ENCODE measurements at regions of chr20 and their contacts with region 1.

Region 1: GRCh38 chr20:49219089-49219923 is at the start of gene DDX27:
- DNase-seq: peak; percentile 98
- ATAC-seq: peak; percentile 90
- H3K4me3 Mint-ChIP-seq: peak within 1 kb of the TSS; percentile 90
- H3K27ac Mint-ChIP-seq: peak within 1 kb of the TSS; percentile 96
- H3K4me1 Mint-ChIP-seq: peaks cover 28% of the 10 kb centered on the region
- H3K27me3 Mint-ChIP-seq: no peaks in the 10 kb centered on the region
- total RNA-seq, gene DDX27: 38.3 to 38.6 TPM

Region 2: DNA sequence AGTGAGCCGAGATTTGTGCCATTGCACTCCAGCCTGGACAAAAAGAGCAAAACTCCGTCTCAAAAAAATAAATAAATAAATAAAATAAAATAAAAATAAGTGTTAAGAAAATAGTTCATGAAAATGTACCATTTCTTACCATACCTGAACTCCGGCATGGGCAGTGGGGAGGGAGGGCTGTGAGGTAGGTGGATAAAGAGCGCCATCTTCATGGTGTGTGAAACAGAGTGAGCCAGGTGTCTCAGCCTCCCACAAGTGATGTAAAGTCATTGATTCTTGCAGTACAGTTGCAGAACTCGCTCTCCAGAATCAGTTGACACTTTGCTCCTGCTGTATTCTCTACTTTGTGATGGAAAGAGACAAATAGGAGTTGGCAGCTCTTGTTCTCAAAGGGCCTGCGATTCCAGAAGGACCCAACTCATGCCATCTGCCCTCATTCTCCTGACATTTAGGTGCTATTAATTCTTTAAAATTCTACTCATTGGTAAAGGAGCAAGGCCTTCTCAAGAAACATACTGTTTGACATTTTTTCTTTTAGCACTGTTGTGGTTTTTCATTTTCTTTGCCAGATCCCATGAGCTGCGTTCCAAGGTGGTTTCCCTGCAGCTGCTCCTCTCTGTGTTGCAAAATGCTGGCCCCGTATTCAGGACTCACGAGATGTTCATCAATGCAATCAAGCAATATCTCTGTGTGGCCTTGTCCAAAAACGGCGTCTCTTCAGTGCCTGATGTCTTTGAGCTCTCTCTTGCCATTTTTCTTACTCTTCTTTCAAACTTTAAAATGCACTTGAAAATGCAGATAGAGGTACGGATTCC is 248.5 kb before region 1 on chr20:
- CTCF ChIA-PET with region 1: no interaction called
- POLR2A ChIA-PET with region 1: no interaction called
- DNase-seq: no peak
- ATAC-seq: no peak
- H3K4me3 Mint-ChIP-seq: no peak overlapping the region
- H3K27ac Mint-ChIP-seq: no peak overlapping the region
- H3K4me1 Mint-ChIP-seq: no peaks in the 10 kb centered on the region
- H3K27me3 Mint-ChIP-seq: no peaks in the 10 kb centered on the region

Region 3: GRCh38 chr20:49132995-49133478 is 86.3 kb before region 1 on chr20:
- CTCF ChIA-PET with region 1: interaction called, 185 read pairs
- POLR2A ChIA-PET with region 1: interaction called, 3 read pairs
- DNase-seq: peak; percentile 30
- ATAC-seq: peak; percentile 53
- H3K4me3 Mint-ChIP-seq: no peak overlapping the region
- H3K27ac Mint-ChIP-seq: no peak overlapping the region
- H3K4me1 Mint-ChIP-seq: peaks cover 6% of the 10 kb centered on the region
- H3K27me3 Mint-ChIP-seq: no peaks in the 10 kb centered on the region

Region 4: GRCh38 chr20:49166534-49167449 is 52.5 kb before region 1 on chr20:
- CTCF ChIA-PET with region 1: interaction called, 33 read pairs
- POLR2A ChIA-PET with region 1: interaction called, 3 read pairs
- DNase-seq: no peak
- ATAC-seq: peak; percentile 85
- H3K4me3 Mint-ChIP-seq: peak overlapping the region; percentile 49
- H3K27ac Mint-ChIP-seq: peak overlapping the region; percentile 84
- H3K4me1 Mint-ChIP-seq: peaks cover 50% of the 10 kb centered on the region
- H3K27me3 Mint-ChIP-seq: no peaks in the 10 kb centered on the region

Region 5: DNA sequence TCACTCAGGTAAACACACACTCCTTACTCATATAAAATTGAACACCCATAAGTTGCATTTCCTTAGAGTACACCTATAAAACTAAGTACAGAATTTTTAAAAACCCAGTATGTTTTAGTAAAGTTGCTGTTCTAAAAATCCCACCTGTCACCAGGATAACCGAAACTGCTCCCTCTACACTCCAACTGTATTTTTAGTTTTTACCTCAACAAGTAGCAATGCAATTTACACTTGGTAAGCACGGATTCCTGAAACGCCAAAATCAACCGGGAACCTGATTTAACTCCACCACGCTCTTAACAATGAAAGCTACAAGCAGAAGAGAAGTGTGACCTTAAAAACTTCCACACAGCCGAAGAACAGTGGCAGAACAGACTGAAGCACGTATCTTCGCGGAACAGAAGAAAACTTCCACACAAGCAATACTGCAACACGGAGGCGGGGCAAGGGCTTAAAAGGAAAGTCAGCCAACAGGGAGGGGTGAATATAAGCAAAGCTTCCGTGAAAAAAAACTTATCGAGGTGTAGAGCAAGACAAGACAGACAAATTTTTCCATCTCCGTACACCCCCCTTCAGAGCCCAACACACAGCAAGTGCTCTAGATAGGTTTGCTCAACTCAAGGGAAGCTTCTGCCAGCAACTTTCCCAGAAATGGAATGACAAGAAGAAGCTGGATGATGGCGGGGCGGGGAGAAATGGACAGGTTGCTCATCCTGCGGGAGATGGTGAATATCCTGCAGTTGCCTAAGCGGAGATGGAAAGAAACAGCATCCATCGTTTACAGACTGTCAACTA is 32.6 kb before region 1 on chr20:
- CTCF ChIA-PET with region 1: interaction called, 58 read pairs
- POLR2A ChIA-PET with region 1: interaction called, 3 read pairs
- DNase-seq: peak; percentile 75
- ATAC-seq: peak; percentile 41
- H3K4me3 Mint-ChIP-seq: peak overlapping the region; percentile 83
- H3K27ac Mint-ChIP-seq: peak overlapping the region; percentile 79
- H3K4me1 Mint-ChIP-seq: peaks cover 48% of the 10 kb centered on the region
- H3K27me3 Mint-ChIP-seq: peaks cover 6% of the 10 kb centered on the region

Region 6: GRCh38 chr20:49207076-49207475 is 12.2 kb before region 1 on chr20:
- CTCF ChIA-PET with region 1: interaction called, 15 read pairs
- POLR2A ChIA-PET with region 1: no interaction called
- DNase-seq: no peak
- ATAC-seq: no peak
- H3K4me3 Mint-ChIP-seq: no peak overlapping the region
- H3K27ac Mint-ChIP-seq: no peak overlapping the region
- H3K4me1 Mint-ChIP-seq: no peaks in the 10 kb centered on the region
- H3K27me3 Mint-ChIP-seq: no peaks in the 10 kb centered on the region

Region 7: DNA sequence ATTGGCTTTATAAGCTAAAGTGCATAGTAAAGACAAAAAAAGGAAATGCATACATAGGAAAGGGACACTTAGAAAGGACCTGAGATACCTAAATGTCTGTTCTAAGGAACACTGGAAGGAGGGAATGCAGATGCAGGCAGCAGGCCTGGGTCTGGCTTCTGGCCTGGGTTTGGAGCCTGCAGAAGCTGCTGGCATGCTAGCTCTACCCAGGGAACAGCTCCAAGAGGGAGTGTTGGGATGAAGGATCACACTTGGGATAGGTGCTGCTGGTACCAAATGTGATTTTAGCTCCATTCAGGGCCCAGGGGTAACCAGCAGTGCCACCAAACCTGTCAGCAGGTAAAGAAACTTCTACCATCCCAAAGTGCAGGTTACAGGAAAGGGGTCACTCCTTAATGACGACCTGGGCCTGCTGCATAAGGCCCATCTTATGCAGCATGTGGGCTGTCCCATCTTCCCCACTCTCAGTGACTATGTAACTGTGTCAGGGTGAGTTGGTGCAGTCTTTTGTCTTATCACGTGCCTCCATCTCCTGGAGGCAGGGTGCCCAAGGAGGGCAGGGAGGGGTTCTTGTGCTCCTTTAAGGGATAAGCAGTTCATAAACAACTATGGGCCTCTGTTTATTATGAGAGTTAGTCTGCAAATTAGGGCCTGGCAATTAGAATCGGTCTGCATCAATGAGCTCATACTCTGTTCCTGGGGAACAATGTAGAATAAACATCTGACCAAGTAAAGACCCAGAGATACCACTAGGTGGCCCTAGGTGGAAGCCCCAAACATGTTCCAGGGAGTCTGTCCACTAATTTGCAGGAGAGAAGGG is 26.8 kb after region 1 on chr20:
- CTCF ChIA-PET with region 1: interaction called, 13 read pairs
- POLR2A ChIA-PET with region 1: interaction called, 6 read pairs
- DNase-seq: peak; percentile 38
- ATAC-seq: peak; percentile 68
- H3K4me3 Mint-ChIP-seq: no peak overlapping the region
- H3K27ac Mint-ChIP-seq: peak overlapping the region; percentile 9
- H3K4me1 Mint-ChIP-seq: no peaks in the 10 kb centered on the region
- H3K27me3 Mint-ChIP-seq: no peaks in the 10 kb centered on the region

Region 8: GRCh38 chr20:49340161-49340966 is 121.1 kb after region 1 on chr20:
- CTCF ChIA-PET with region 1: no interaction called
- POLR2A ChIA-PET with region 1: no interaction called
- DNase-seq: no peak
- ATAC-seq: no peak
- H3K4me3 Mint-ChIP-seq: no peak overlapping the region
- H3K27ac Mint-ChIP-seq: no peak overlapping the region
- H3K4me1 Mint-ChIP-seq: no peaks in the 10 kb centered on the region
- H3K27me3 Mint-ChIP-seq: peaks cover 9% of the 10 kb centered on the region